ENCODE measurements at regions of chr14 and their contacts with region 1.

Region 1: GRCh38 chr14:39229222-39229543 is 4.5 kb upstream of the MIA2 start:
- DNase-seq: peak; percentile 76
- ATAC-seq: peak; percentile 97
- H3K4me3 Mint-ChIP-seq: no peak overlapping the region
- H3K27ac Mint-ChIP-seq: peak overlapping the region; percentile 94
- H3K4me1 Mint-ChIP-seq: peaks cover 47% of the 10 kb centered on the region
- H3K27me3 Mint-ChIP-seq: no peaks in the 10 kb centered on the region

Region 2: GRCh38 chr14:39114073-39114838 is 114.9 kb before region 1 on chr14 and contains the start of gene GEMIN2:
- CTCF ChIA-PET with region 1: no interaction called
- POLR2A ChIA-PET with region 1: no interaction called
- intact Hi-C with region 1: loop called in 1 of 2 experiments (anchors 1 kb)
- DNase-seq: peak; percentile 97
- ATAC-seq: peak; percentile 99
- H3K4me3 Mint-ChIP-seq: peak within 1 kb of the TSS; percentile 95
- H3K27ac Mint-ChIP-seq: peak within 1 kb of the TSS; percentile 94
- H3K4me1 Mint-ChIP-seq: peaks cover 19% of the 10 kb centered on the region
- H3K27me3 Mint-ChIP-seq: no peaks in the 10 kb centered on the region
- total RNA-seq, gene GEMIN2: 23.8 to 27.6 TPM

Region 3: GRCh38 chr14:39181026-39181692 is 48.0 kb before region 1 on chr14:
- CTCF ChIA-PET with region 1: no interaction called
- POLR2A ChIA-PET with region 1: interaction called, 13 read pairs
- intact Hi-C with region 1: no loop called
- DNase-seq: no peak
- ATAC-seq: peak; percentile 17
- H3K4me3 Mint-ChIP-seq: no peak overlapping the region
- H3K27ac Mint-ChIP-seq: no peak overlapping the region
- H3K4me1 Mint-ChIP-seq: peaks cover 28% of the 10 kb centered on the region
- H3K27me3 Mint-ChIP-seq: no peaks in the 10 kb centered on the region

Region 4: DNA sequence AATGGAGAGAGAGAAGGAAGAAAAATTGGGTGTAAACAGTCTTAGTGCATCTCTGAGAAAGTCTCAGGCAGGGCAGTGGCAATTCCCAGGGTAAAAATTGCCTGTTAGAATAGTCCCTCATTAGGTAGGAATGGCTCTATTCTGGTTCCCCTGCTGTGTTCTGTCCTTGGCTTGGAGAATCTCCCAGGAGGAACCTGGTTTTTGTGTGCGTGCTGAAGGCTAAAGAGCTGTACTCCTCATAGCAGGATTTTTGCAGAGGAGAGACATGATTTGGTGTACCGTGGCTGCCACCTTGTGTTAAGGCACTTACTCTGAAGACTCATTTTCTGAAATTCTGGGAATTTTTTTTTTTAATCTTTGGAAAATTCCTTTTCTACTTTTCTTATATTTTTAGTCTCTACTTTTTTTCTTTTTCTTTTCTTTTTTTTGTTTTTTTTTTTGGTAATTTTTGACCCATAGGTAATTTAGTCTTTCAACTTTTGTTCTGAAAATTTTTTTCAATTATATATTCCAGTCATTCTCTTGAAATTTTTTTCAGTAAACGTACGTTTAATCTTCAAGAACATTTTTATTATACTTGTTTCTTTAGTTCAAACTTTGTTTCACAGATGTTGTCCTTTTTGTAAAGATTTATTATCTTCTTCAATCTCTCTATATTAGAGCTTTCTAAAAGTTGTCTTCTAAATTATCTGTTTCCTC is 139.2 kb after region 1 on chr14:
- CTCF ChIA-PET with region 1: no interaction called
- POLR2A ChIA-PET with region 1: no interaction called
- intact Hi-C with region 1: loop called (anchors 1 to 2 kb)
- DNase-seq: peak; percentile 64
- ATAC-seq: no peak
- H3K4me3 Mint-ChIP-seq: no peak overlapping the region
- H3K27ac Mint-ChIP-seq: no peak overlapping the region
- H3K4me1 Mint-ChIP-seq: no peaks in the 10 kb centered on the region
- H3K27me3 Mint-ChIP-seq: no peaks in the 10 kb centered on the region

Measured in activated CD4-positive, alpha-beta T cell treated with anti-CD3 and anti-CD28 coated beads for 36 hours (primary cell).